Mammary epithelial cell (primary cell): ENCODE measurements at regions of chr3 and their contacts with region 1.

Region 1: DNA sequence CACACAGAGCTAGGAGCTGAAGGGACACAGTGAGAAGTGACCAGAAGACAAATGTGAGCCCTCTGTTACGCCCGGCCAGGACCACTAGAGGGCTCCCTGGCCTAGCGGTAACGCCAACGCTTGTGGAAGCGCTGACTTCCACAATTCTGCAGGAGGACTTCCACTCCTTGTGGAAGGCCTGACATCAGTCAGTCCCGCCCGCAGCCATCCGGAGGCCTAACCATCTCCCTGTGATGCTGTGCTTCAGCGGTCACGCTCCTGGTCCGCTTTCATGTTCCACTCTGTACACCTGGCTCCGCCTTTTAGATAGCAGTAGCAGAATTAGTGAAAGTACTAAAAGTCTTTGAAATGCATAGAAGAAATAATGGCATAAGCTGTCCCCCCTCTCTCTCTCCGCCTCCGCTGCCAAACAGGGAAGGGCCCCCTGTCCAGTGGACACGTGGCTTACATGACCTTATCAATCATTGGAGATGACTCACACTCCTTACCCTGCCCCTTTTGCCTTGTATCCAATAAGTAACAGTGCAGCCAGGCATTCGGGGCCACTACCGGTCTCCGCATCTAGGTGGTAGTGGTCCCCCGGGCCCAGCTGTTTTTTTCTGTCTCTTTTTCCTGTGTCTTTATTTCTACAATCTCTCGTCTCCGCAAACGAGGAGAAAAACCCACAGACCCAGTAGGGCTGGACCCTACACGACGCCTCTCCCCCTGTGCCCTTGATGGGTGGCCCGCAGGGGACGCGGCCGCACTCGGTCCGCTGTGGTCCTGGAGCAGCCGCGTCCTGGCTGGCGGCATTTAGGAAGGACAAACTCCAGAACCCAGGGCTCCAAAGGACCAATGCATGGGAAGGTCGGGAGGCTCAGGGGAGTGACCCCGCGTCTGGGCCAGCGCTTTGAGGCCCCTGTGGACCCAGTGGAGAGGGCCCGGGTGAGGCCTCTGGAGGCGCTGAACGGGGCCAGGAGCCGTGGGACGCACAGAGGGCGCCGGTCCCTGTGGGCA is 27.0 kb upstream of the RPL32 start:
- DNase-seq: peak; percentile 70
- H3K4me3 ChIP-seq: no peak overlapping the region
- H3K27ac ChIP-seq: no peak overlapping the region
- H3K4me1 ChIP-seq: no peaks in the 10 kb centered on the region
- H3K27me3 ChIP-seq: no peaks in the 10 kb centered on the region
- CTCF ChIP-seq: peak; percentile 78 to 92

Region 2: DNA sequence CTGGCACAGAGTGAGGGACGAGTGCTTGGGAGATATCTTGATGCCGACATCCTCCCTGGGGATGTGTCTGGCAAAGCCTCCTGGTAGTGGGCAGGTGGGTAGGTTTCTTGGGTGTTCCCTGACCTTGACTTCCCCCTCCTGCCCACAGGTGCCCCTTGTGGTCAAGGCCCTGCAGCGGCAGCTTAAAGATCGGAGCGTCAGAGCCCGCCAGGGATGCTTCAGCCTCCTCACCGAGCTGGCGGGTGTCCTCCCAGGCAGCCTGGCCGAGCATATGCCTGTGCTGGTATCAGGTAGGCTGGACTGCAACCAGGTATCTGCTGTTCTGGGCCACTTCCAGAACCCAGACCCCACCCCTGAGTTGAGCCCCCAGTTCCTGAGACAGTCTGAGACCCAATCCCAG is 52.6 kb before region 1 on chr3:
- CTCF ChIA-PET with region 1: no interaction called
- dilution Hi-C with region 1: loop called (anchors 5 kb)
- in situ Hi-C with region 1: no loop called
- intact Hi-C with region 1: no loop called
- DNase-seq: no peak
- H3K4me3 ChIP-seq: no peak overlapping the region
- H3K27ac ChIP-seq: no peak overlapping the region
- H3K4me1 ChIP-seq: no peaks in the 10 kb centered on the region
- H3K27me3 ChIP-seq: no peaks in the 10 kb centered on the region
- CTCF ChIP-seq: no peak

Region 3: GRCh38 chr3:12967606-12968351 is 99.4 kb after region 1 on chr3:
- CTCF ChIA-PET with region 1: interaction called, 13 read pairs
- dilution Hi-C with region 1: no loop called
- in situ Hi-C with region 1: no loop called
- intact Hi-C with region 1: no loop called
- DNase-seq: peak; percentile 70
- H3K4me3 ChIP-seq: peak overlapping the region; percentile 73 to 81 (median 77)
- H3K27ac ChIP-seq: peak overlapping the region; percentile 1
- H3K4me1 ChIP-seq: peaks cover 10% of the 10 kb centered on the region
- H3K27me3 ChIP-seq: no peaks in the 10 kb centered on the region
- CTCF ChIP-seq: no peak

Region 4: GRCh38 chr3:12984023-12984823 is 115.9 kb after region 1 on chr3:
- CTCF ChIA-PET with region 1: interaction called, 12 read pairs
- dilution Hi-C with region 1: no loop called
- in situ Hi-C with region 1: no loop called
- intact Hi-C with region 1: loop called (anchors 1 kb)
- DNase-seq: peak; percentile 39
- H3K4me3 ChIP-seq: no peak overlapping the region
- H3K27ac ChIP-seq: no peak overlapping the region
- H3K4me1 ChIP-seq: no peaks in the 10 kb centered on the region
- H3K27me3 ChIP-seq: peaks cover 4% of the 10 kb centered on the region
- CTCF ChIP-seq: peak; percentile 77 to 86

Region 5: GRCh38 chr3:12994607-12995388 is 126.5 kb after region 1 on chr3:
- CTCF ChIA-PET with region 1: no interaction called
- dilution Hi-C with region 1: loop called (anchors 5 kb)
- in situ Hi-C with region 1: no loop called
- intact Hi-C with region 1: loop called (anchors 1 kb)
- DNase-seq: peak; percentile 68
- H3K4me3 ChIP-seq: peak overlapping the region; percentile 57 to 63 (median 62)
- H3K27ac ChIP-seq: no peak overlapping the region
- H3K4me1 ChIP-seq: peaks cover 17% of the 10 kb centered on the region
- H3K27me3 ChIP-seq: peaks cover 6% of the 10 kb centered on the region
- CTCF ChIP-seq: peak; percentile 53 to 84